ENCODE measurements at regions of chr12 and their contacts with region 1.

Region 1: DNA sequence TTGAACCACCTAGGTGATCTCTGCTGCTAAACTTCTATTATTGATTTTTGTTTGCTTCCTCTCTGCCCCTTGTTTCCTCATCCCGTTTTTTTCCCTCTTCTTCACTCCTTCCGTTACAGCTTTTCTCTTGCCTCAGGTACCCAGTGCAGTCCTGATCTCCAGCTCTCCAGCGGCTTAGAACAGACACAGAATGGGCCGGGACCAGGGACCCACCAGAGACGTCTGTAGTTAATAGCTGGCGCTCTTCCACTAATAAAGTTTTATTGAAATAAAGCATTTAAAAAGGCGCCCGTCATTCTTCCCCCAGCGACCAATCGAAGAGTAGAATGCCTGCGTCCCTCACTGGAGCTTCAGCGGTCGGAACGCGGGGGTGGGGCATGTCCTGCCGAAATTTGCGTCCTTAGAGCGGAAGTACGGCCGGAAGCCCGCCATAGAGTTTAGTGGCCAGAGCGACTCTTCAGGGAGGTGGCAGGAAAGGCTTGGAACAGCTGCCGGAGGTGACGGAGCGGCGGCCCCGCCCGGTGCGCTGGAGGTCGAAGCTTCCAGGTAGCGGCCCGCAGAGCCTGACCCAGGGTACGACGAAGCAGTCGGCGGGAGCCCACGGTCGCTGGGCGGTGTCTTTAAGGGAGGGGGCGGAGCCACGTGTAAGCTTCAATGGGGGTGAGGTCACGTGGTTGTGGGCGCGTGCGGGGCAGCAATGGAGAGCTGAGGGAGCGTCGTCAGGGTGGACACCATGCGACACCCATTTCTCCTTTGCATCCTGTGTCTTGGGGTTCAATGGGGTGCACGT is at the start of gene COPS7A:
- DNase-seq: peak; percentile 98 to 99 (median 99)
- ATAC-seq: peak; percentile 98 to 99 (median 99)
- H3K4me3 ChIP-seq: peak within 1 kb of the TSS; percentile 37 to 84 (median 66)
- H3K27ac ChIP-seq: peak within 1 kb of the TSS; percentile 68 to 95 (median 90)
- H3K4me1 ChIP-seq: peaks cover 0 to 23% (median 11%) of the 10 kb centered on the region in 12 donors
- H3K27me3 ChIP-seq: no peaks in the 10 kb centered on the region
- CTCF ChIP-seq: peak in 3 of 12 donors; percentile 8 to 18 (median 9)
- POLR2A ChIP-seq: peak in 1 of 2 donors; percentile 58
- total RNA-seq, gene COPS7A: 56.7 to 96.4 (median 82.6) TPM

Region 2: GRCh38 chr12:6688999-6689882 is 34.6 kb before region 1 on chr12 and contains the start of gene ZNF384:
- intact Hi-C with region 1: loop called in 3 of 10 experiments (anchors 2 to 5 kb)
- DNase-seq: peak; percentile 97 to 99 (median 98)
- ATAC-seq: peak; percentile 92 to 97 (median 94)
- H3K4me3 ChIP-seq: peak within 1 kb of the TSS; percentile 67 to 100 (median 88)
- H3K27ac ChIP-seq: peak within 1 kb of the TSS; percentile 88 to 100 (median 99)
- H3K4me1 ChIP-seq: peaks cover 0 to 50% (median 33%) of the 10 kb centered on the region in 12 donors
- H3K27me3 ChIP-seq: no peaks in the 10 kb centered on the region
- CTCF ChIP-seq: peak in 5 of 12 donors; percentile 8 to 37 (median 21)
- POLR2A ChIP-seq: peak in 1 of 2 donors; percentile 58
- total RNA-seq, gene ZNF384: 19.4 to 38.1 (median 25.2) TPM

Measured in heart left ventricle (tissue), 16 donors.